ENCODE measurements at regions of chr11 and their contacts with region 1.

Region 1: GRCh38 chr11:7965386-7965785 is at the start of gene NLRP10:
- DNase-seq: peak; percentile 77
- H3K4me3 ChIP-seq: peak within 1 kb of the TSS; percentile 25
- CTCF ChIP-seq: no peak

Region 2: GRCh38 chr11:7892840-7893254 is 72.5 kb before region 1 on chr11:
- CTCF ChIA-PET with region 1: interaction called, 10 read pairs
- POLR2A ChIA-PET with region 1: no interaction called
- DNase-seq: peak; percentile 28
- H3K4me3 ChIP-seq: no peak overlapping the region
- CTCF ChIP-seq: peak; percentile 56

Region 3: GRCh38 chr11:7977232-7977917 is 12.0 kb after region 1 on chr11:
- CTCF ChIA-PET with region 1: interaction called, 22 read pairs
- POLR2A ChIA-PET with region 1: interaction called, 17 read pairs
- DNase-seq: peak; percentile 87
- H3K4me3 ChIP-seq: no peak overlapping the region
- CTCF ChIP-seq: no peak

Region 4: GRCh38 chr11:7999795-8000194 is 34.4 kb after region 1 on chr11:
- CTCF ChIA-PET with region 1: no interaction called
- POLR2A ChIA-PET with region 1: no interaction called
- DNase-seq: no peak
- H3K4me3 ChIP-seq: no peak overlapping the region
- CTCF ChIP-seq: no peak

Measured in AG04449 (cell line).